Common myeloid progenitor, CD34-positive (primary cell): ENCODE measurements at regions of chr3 and their contacts with region 1.

Region 1: GRCh38 chr3:50542177-50543034 is 25.1 kb downstream of the C3orf18 start:
- DNase-seq: peak; percentile 28 to 66 (median 50)
- H3K4me3 ChIP-seq: no peak overlapping the region
- H3K27ac ChIP-seq: no peak overlapping the region
- H3K4me1 ChIP-seq: peaks cover 0 to 2% (median 0%) of the 10 kb centered on the region in 4 experiments
- H3K27me3 ChIP-seq: peaks cover 0 to 14% (median 2%) of the 10 kb centered on the region in 5 experiments

Region 2: DNA sequence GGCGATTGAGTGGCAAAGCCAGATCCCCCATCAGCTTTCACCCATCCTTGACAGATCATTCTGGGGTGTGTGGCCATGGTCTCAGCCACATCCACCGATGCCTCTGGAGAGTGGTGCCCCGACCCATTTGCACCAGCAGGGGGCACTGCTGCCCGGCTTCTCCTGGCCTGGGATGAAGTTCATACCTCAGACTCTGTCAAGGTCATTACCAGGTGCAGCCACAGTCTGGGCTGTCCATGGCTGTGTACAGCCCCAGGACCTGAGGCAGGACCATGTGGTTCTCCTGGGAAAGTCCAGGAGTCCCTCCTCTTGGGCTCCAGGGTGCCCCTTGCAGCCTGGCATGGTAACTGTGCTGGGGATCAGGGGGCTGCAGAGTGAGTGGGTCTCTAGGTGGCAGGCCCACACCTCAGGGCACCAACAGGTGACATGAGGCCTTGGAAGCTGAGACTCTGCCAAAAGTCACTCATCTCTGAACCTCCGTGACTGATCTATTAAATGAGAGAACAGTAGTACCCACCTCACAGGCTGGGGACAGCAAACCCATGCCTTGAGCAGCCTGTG is 106.2 kb before region 1 on chr3:
- CTCF ChIA-PET with region 1: interaction called, 257 read pairs
- POLR2A ChIA-PET with region 1: no interaction called
- DNase-seq: peak; percentile 54 to 75 (median 67)
- H3K4me3 ChIP-seq: no peak overlapping the region
- H3K27ac ChIP-seq: no peak overlapping the region
- H3K4me1 ChIP-seq: no peaks in the 10 kb centered on the region
- H3K27me3 ChIP-seq: no peaks in the 10 kb centered on the region

Region 3: DNA sequence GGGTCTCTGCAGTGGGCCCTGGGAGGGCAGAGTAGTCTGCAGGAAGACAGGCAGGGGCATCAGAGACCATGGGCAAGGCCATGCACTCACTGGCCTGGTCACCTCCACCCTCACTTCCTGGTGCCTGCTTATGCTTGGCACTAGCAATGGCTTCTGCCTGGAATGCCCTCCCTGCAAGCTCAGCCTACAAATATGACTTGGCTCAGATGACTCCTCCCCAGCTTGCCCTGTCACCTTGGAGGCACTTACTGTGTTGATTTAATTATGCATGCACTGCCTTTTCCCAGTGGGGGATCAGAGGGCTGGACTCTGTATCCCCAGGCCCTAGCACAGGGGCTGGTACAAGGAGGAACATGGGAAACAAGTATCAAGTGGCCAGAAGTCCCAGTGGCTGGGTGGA is 17.3 kb after region 1 on chr3:
- CTCF ChIA-PET with region 1: interaction called, 20 read pairs
- POLR2A ChIA-PET with region 1: no interaction called
- DNase-seq: no peak
- H3K4me3 ChIP-seq: no peak overlapping the region
- H3K27ac ChIP-seq: no peak overlapping the region
- H3K4me1 ChIP-seq: no peaks in the 10 kb centered on the region
- H3K27me3 ChIP-seq: no peaks in the 10 kb centered on the region

Region 4: GRCh38 chr3:51522273-51522978 is 980.0 kb after region 1 on chr3:
- CTCF ChIA-PET with region 1: no interaction called
- POLR2A ChIA-PET with region 1: no interaction called
- DNase-seq: no peak
- H3K4me3 ChIP-seq: peak overlapping the region in 2 of 7 experiments; percentile 37 to 57
- H3K27ac ChIP-seq: no peak overlapping the region
- H3K4me1 ChIP-seq: peaks cover 0 to 11% (median 6%) of the 10 kb centered on the region in 4 experiments
- H3K27me3 ChIP-seq: no peaks in the 10 kb centered on the region